Left colon (tissue), 2 donors: ENCODE measurements at regions of chr17 and their contacts with region 1.

Region 1: DNA sequence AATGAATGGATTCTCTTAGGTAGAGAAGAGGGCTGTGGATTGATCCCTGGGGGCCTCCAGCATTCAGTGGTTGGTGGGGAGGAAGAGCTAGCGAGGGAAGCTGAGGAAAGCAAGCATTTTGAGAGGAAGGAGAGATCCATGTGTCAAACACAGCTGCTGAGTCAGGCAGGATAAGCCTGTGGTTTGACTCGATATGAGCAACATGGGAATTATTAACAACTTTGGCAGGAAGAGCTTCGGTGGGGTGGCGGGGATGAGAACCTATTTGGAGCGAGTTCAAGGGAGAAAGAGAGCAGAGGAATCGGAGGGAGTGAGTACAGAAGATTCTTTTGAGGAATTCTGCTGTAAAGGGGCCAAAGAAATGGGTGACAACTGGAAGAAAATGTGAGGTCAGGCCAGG is 59.5 kb upstream of the CDC42EP4 start:
- DNase-seq: no peak
- ATAC-seq: no peak

Region 2: GRCh38 chr17:73255671-73256181 is 115.6 kb before region 1 on chr17:
- intact Hi-C with region 1: loop called (anchors 5 kb)
- DNase-seq: peak in 1 of 2 donors; percentile 65
- ATAC-seq: peak; percentile 75

Region 3: GRCh38 chr17:73657473-73658116 is 286.3 kb after region 1 on chr17:
- intact Hi-C with region 1: no loop called
- DNase-seq: peak; percentile 65 to 81
- ATAC-seq: peak; percentile 81